ENCODE measurements at regions of chr12 and their contacts with region 1.

Region 1: GRCh38 chr12:75390899-75391538 is at the start of gene GLIPR1L2:
- DNase-seq: peak; percentile 93
- H3K4me3 Mint-ChIP-seq: peak within 1 kb of the TSS; percentile 87
- H3K27ac Mint-ChIP-seq: peak within 1 kb of the TSS; percentile 89
- H3K4me1 Mint-ChIP-seq: peaks cover 27% of the 10 kb centered on the region
- H3K27me3 Mint-ChIP-seq: no peaks in the 10 kb centered on the region
- total RNA-seq, gene GLIPR1L2: 0.33 to 0.35 TPM

Region 2: DNA sequence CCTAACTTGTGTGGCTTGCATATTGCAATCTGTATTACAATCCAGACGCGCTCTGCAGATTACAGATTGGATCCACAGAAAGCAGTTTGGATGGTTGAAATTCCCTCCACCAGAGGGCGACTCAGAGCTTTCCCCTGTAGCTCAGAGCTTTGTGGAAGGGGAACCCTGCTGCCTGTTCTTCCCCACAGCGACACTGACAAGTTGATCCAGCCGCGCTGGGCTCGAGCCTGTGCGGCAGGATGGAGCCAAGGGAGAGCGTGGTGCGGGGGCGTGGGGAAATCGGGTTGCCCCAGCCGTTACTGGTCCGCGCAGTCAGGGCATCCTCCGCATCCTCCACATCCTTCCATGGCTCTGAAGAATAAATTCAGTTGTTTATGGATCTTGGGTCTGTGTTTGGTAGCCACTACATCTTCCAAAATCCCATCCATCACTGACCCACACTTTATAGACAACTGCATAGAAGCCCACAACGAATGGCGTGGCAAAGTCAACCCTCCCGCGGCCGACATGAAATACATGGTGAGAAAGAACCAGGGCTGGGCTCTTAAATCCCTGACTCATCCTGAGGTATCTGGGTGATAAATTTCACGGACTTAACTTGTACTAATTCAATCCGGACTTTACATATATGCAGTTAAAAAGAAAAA is 56.5 kb before region 1 on chr12 and contains the start of gene GLIPR1L1:
- CTCF ChIA-PET with region 1: interaction called, 5 read pairs
- intact Hi-C with region 1: loop called (anchors 1 kb)
- DNase-seq: peak; percentile 92
- H3K4me3 Mint-ChIP-seq: peak within 1 kb of the TSS; percentile 44
- H3K27ac Mint-ChIP-seq: no peak within 1 kb of the TSS
- H3K4me1 Mint-ChIP-seq: peaks cover 18% of the 10 kb centered on the region
- H3K27me3 Mint-ChIP-seq: peaks cover 32% of the 10 kb centered on the region
- total RNA-seq, gene GLIPR1L1: not detected

Region 3: DNA sequence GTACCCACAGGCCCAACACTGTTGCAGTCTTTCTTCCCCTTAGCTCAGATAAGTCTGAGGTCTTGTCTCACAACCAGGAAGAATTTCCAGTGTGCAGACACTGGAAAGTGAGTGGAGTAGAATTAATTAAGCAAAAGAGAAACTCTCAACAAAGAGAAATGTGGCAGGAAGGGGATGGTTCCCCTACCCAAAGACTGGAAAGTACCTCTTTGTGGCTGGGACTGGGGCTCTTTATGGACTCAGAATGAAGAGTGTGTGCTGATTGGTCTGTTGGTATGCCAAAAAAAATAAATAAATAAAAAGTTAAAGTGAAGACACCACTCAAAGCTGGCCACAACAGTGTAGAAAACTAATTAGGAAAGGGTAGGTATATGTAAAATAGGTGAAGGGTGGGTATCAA is 30.1 kb before region 1 on chr12:
- CTCF ChIA-PET with region 1: no interaction called
- intact Hi-C with region 1: loop called (anchors 2 kb)
- DNase-seq: no peak
- H3K4me3 Mint-ChIP-seq: no peak overlapping the region
- H3K27ac Mint-ChIP-seq: peak overlapping the region; percentile 30
- H3K4me1 Mint-ChIP-seq: peaks cover 11% of the 10 kb centered on the region
- H3K27me3 Mint-ChIP-seq: no peaks in the 10 kb centered on the region

Region 4: DNA sequence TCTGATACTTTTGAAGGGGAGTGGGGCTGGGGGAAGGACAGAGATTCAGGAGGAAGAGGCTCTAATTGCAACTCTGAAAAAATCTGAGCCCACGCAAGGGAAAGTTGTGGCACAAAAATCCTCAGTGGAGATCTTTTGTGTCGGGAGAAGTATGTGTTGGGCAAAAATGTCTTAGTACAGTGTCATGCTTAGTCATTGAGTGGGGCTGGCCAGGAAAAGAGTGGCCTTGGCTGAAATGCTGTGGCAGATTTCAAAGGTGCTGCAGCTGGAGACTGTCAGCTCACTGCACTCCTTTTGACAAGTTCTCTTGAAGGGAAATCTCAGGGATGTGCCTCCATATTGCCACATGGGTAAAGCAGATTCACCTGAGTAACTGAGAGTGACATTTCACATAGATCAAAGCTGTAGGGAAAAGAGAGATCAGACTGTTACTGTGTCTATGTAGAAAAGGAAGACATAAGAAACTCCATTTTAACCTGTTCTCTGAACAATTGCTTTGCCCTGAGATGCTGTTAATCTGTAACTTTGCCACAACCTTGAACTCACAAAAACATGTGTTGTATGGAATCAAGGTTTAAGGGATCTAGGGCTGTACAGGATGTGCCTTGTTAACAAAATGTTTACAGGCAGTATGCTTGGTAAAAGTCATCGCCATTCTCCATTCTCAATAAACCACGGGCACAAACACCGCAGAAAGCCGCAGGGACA is 53.6 kb after region 1 on chr12:
- CTCF ChIA-PET with region 1: no interaction called
- intact Hi-C with region 1: no loop called
- DNase-seq: no peak
- H3K4me3 Mint-ChIP-seq: no peak overlapping the region
- H3K27ac Mint-ChIP-seq: no peak overlapping the region
- H3K4me1 Mint-ChIP-seq: no peaks in the 10 kb centered on the region
- H3K27me3 Mint-ChIP-seq: peaks cover 12% of the 10 kb centered on the region

Region 5: DNA sequence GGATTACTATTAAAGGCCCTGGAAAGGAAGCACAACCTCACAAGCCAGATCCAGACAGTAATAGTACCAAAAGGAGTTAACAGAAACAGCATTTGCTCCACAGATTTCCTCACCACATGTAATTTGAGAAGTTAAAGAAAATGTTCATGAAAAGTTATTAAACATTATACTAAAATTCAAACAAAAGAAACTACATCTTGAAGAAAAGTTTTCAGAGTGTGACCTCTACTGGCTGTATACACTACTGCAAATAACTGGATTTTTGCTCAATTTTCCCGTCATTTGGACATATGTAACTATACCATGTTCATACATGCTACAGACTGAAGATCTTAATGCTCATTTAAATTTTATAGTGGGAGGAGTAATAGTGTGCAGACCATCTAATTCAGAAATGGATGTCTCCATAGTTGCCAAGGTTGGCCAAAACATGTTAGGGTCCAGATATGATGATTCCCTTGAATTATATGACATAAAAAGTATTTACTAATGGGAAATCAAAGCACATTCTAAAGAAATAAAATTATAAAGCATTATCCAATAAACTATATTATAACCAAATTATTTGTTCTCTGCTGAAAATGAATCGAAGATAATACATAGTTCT is 114.8 kb after region 1 on chr12:
- CTCF ChIA-PET with region 1: interaction called, 12 read pairs
- intact Hi-C with region 1: loop called (anchors 1 kb)
- DNase-seq: no peak
- H3K4me3 Mint-ChIP-seq: no peak overlapping the region
- H3K27ac Mint-ChIP-seq: peak overlapping the region; percentile 31
- H3K4me1 Mint-ChIP-seq: peaks cover 29% of the 10 kb centered on the region
- H3K27me3 Mint-ChIP-seq: no peaks in the 10 kb centered on the region

Region 6: GRCh38 chr12:75613981-75614380 is 223.0 kb after region 1 on chr12:
- CTCF ChIA-PET with region 1: no interaction called
- intact Hi-C with region 1: no loop called
- DNase-seq: no peak
- H3K4me3 Mint-ChIP-seq: no peak overlapping the region
- H3K27ac Mint-ChIP-seq: no peak overlapping the region
- H3K4me1 Mint-ChIP-seq: no peaks in the 10 kb centered on the region
- H3K27me3 Mint-ChIP-seq: peaks cover 35% of the 10 kb centered on the region

Region 7: DNA sequence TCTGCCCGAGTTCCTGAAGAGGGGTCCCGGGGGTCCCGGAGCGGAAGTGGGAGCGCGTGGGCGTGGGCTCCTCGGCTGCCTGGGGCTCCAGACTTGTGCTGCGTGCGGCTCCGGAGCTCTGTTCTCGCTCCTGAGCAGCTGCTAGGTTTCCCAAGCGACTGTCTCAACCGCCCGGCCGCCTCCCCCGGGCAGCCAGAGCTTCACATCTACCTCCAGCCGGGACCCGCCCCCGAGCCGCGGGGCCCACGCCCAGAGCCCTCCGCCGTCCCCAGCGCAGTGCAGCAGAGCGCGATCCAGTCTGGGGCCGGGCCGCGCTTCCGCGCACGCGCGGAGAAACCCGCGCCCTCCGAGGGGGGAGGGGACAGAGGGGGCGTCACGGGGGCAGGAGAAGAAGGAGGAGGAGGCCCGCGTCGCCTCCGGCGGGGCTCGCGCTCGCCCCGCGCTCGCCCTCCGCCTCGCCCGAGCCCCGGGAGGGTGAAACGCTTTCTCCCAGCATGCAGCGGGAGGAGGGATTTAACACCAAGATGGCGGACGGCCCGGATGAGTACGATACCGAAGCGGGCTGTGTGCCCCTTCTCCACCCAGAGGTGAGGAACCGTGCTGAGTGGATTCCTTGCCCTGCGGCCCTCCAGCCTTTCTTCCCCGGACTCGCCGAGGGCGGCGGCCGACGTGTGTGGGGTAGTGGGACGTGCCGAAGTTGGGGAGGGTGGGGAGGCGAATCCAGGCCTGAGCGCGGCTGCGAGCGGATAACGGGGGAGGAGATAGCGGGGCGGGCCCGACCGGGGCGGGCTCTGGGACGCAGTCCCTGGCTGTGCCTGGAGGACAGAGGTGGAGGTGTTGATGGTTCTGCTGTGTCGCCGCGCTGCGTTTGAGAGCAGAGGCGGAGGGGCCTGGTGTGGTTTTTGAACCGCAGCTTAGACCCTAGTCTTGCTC is 1373.0 kb after region 1 on chr12 and contains the start of gene ZDHHC17:
- CTCF ChIA-PET with region 1: no interaction called
- intact Hi-C with region 1: loop called (anchors 5 kb)
- DNase-seq: peak; percentile 88
- H3K4me3 Mint-ChIP-seq: peak within 1 kb of the TSS; percentile 98
- H3K27ac Mint-ChIP-seq: peak within 1 kb of the TSS; percentile 91
- H3K4me1 Mint-ChIP-seq: peaks cover 38% of the 10 kb centered on the region
- H3K27me3 Mint-ChIP-seq: no peaks in the 10 kb centered on the region
- total RNA-seq, gene ZDHHC17: 19.1 to 22.2 TPM

Measured in activated naive CD4-positive, alpha-beta T cell treated with anti-CD3 and anti-CD28 coated beads for 36 hours (primary cell).